Activated CD4-positive, alpha-beta memory T cell treated with anti-CD3 and anti-CD28 coated beads, Interleukin-2, amount 10 ng/mL, durations not matched to agents 7 days and 5 days (primary cell): ENCODE measurements at regions of chr16 and their contacts with region 1.

Region 1: GRCh38 chr16:11105038-11105903 is 150.7 kb downstream of the SOCS1 start:
- DNase-seq: peak; percentile 67
- H3K4me3 Mint-ChIP-seq: peak overlapping the region; percentile 19
- H3K27ac Mint-ChIP-seq: peak overlapping the region; percentile 90
- H3K4me1 Mint-ChIP-seq: peaks cover 83% of the 10 kb centered on the region
- H3K27me3 Mint-ChIP-seq: no peaks in the 10 kb centered on the region

Region 2: DNA sequence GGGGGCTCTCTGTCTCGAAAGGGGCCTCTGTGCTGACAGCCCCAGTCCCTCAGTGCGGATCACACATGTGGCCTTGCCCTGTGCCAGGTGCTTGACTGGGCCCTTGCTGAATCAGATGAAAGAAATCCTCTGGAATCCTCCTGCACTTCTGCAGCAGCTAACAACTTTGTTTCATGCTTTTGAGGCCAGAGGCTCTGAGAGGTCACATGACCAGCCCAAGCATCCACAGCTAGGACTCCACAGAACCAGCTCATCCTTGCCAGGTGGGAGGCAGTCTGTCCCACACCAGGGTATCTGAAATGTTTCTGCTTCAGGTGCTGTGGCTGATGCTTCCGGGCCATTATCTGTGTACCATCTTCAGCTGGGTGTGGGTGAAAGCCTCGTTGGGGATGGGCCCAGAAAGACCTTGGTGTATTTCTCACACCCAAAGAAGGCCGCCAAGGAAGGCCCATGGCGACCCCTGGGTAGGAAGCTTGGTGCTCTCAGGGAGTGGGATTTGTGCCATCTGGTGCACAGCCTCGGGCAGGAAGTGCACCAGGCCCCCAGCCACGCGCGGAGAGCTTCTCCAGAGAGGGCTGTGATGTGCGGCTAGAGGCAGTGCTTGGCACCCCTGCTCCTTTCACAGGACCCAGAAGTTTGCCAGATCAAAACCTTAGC is 17.1 kb before region 1 on chr16:
- CTCF ChIA-PET with region 1: interaction called, 21 read pairs
- POLR2A ChIA-PET with region 1: interaction called, 26 read pairs
- DNase-seq: peak; percentile 52
- H3K4me3 Mint-ChIP-seq: no peak overlapping the region
- H3K27ac Mint-ChIP-seq: peak overlapping the region; percentile 76
- H3K4me1 Mint-ChIP-seq: peaks cover 75% of the 10 kb centered on the region
- H3K27me3 Mint-ChIP-seq: no peaks in the 10 kb centered on the region

Region 3: DNA sequence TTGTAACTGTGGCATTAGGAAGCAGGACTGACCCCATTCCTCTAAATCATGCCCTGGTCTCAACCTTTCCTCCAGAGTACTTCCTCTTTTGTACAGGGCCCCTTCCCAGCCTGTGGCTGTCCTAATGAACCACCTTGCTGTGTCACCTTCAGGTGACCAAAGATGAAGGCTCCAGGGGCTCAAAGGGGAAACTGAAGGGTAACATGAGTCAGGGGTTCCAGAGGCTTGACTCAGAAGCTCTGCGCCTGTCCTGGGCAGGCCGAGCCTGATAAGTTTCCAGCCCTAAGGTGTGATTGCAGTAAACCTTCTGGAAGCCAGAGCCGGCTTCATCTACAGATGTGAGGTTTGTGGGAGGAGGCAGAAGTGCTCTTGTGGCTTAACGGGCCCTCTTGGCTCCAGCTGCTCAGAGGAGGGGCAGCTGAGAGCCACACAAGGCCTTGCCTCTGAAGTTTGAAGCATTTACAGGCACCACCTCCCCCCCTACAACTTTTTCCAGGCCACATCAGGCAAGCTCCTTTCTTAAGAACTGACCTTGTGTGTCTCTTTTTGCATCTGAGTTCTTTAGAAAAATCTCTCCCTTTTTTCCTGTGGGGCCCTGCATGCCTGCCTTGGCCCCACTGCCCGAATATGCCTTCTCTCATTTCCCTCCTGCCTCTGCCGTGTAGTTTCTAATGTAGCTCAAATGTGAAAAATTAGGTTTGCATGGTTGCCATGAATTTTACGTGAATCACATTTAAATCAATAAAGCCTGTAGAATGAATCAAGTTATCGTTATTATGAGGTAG is 11.0 kb before region 1 on chr16:
- CTCF ChIA-PET with region 1: interaction called, 21 read pairs
- POLR2A ChIA-PET with region 1: interaction called, 26 read pairs
- DNase-seq: peak; percentile 72
- H3K4me3 Mint-ChIP-seq: peak overlapping the region; percentile 36
- H3K27ac Mint-ChIP-seq: peak overlapping the region; percentile 93
- H3K4me1 Mint-ChIP-seq: peaks cover 86% of the 10 kb centered on the region
- H3K27me3 Mint-ChIP-seq: no peaks in the 10 kb centered on the region

Region 4: GRCh38 chr16:11161974-11162373 is 56.7 kb after region 1 on chr16:
- CTCF ChIA-PET with region 1: interaction called, 7 read pairs
- POLR2A ChIA-PET with region 1: interaction called, 14 read pairs
- DNase-seq: no peak
- H3K4me3 Mint-ChIP-seq: no peak overlapping the region
- H3K27ac Mint-ChIP-seq: peak overlapping the region; percentile 70
- H3K4me1 Mint-ChIP-seq: peaks cover 88% of the 10 kb centered on the region
- H3K27me3 Mint-ChIP-seq: no peaks in the 10 kb centered on the region

Region 5: DNA sequence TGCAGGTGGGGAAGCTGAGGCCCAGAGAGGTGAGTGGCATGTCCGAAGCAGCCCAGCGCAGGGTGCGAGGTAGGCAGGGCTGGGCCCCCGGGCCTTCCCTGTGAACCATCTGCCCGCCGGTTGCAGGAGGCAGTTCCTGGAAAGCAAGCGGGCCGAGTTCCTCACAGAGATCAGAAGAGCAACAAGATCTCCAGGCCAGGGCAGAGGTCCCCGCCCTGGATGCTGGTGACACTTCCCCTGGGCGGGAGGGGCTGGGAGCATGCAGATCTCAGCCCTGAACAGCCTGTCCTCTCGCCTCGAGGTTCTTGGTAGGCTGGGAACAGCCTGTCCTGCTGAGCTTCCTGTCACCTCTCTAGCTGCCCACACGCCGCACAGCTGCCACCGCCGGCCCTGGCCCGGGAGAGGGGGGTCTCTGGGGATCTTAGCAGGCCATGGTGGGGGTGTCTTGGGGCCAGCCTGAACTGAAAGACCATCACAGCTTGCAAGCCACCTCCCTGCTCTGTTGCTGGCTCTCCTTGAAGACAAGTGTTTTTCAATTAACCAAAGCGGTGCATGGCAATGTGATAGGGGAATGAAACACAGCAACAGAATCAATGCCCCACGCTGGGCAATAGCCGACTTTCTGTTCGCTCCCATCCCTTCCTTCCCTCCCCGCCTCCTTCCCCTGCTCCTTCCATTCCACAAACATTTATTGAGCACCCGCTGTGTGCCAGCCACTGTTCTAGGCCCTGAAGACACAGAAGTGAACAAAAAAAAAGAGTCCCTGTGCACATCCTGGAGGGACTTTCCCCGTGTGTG is 119.0 kb after region 1 on chr16:
- CTCF ChIA-PET with region 1: interaction called, 13 read pairs
- POLR2A ChIA-PET with region 1: interaction called, 32 read pairs
- DNase-seq: peak; percentile 85
- H3K4me3 Mint-ChIP-seq: peak overlapping the region; percentile 68
- H3K27ac Mint-ChIP-seq: peak overlapping the region; percentile 99
- H3K4me1 Mint-ChIP-seq: peaks cover 67% of the 10 kb centered on the region
- H3K27me3 Mint-ChIP-seq: no peaks in the 10 kb centered on the region

Region 6: GRCh38 chr16:11232852-11233726 is 127.8 kb after region 1 on chr16:
- CTCF ChIA-PET with region 1: interaction called, 7 read pairs
- POLR2A ChIA-PET with region 1: interaction called, 15 read pairs
- DNase-seq: peak; percentile 95
- H3K4me3 Mint-ChIP-seq: peak overlapping the region; percentile 66
- H3K27ac Mint-ChIP-seq: peak overlapping the region; percentile 98
- H3K4me1 Mint-ChIP-seq: peaks cover 86% of the 10 kb centered on the region
- H3K27me3 Mint-ChIP-seq: no peaks in the 10 kb centered on the region